ENCODE measurements at regions of chr1 and their contacts with region 1.

Region 1: DNA sequence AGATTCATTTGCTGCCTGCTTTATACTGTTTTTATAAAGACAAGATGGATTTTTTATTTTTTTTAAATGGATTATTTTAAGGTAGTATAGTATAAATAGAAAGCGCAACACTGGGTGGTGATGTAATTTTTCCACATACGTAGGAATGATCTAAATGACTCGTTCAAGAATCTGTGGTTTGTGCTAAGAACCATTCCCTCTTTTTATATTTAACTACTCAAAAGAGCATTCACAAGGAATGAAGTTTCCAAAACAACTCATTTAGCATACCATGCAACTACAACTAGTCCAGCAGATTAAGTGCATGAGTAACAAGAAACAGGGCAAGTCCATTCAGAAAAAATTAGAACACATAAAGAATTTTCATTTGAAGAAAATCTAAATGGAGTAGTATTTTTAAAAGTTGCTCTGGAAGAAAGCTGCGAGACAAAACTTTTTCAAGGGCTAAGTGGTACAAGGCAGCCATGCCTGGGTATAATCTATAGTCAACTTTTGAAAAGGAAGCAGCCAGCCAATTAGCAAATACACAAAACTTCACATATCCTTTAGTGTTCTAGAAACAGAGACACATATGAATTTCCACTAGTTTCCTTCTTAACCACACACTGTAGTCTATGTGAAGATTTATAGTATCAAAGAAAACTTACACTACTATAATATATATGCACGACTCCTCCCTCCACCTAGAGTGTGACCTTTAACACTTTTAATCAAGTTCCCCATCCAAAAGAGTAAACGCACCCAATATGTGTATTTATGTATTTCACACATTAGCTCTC is 23.4 kb downstream of the GTF2B start:
- DNase-seq: peak; percentile 21
- CTCF ChIP-seq: no peak

Region 2: DNA sequence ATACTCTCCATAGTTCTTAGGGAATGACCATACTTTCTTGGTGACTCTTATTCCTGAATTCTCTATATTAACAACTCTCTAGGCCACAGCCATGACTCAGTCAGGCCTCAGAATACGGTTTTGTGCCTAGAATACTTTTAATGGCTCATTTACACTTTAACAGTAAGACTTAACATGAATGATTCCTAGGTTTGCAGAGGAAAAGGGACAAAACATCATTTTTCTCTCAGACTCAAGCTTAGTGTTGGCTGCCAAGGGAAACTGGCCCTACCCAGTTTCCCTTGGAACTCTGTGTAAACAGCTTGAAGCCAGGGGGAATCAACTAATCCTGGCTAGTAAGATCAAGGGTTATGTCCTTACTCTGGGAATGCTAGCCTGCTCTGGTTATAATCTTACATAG is 348.8 kb before region 1 on chr1:
- in situ Hi-C with region 1: no loop called
- DNase-seq: no peak
- CTCF ChIP-seq: no peak

Region 3: GRCh38 chr1:88655685-88656299 is 212.1 kb before region 1 on chr1:
- in situ Hi-C with region 1: loop called (anchors 10 kb)
- DNase-seq: peak; percentile 45
- CTCF ChIP-seq: peak; percentile 16